ENCODE measurements at regions of chr19 and their contacts with region 1.

Region 1: DNA sequence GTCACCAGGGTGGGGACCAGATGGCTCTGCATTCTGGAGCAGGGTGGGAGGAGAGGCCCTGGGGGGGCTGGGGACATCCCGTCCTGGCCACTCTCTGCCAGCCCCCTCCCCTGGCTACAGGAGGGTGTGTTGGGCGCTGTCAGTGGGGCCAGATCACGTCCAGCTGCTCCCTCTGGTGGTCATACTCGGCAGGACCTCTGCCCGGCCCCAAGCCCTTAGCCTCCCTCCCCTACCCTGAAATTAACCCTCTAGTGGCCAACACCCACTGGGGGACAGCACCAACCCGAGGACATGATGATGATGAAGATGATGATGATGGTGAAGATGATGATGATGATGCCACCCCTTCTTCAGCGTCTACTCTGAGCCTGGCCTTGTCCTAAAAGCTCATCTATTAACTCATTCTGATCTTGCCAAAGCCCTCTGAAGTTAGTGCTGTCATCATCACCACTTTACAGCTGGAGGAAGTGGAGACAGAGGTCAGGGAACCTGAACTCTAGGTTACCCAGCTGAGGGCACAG is 590 bp upstream of the LGI4 start:
- DNase-seq: peak; percentile 86 to 93 (median 92)
- ATAC-seq: peak; percentile 98
- H3K4me3 ChIP-seq: no peak overlapping the region
- H3K27ac ChIP-seq: no peak overlapping the region
- H3K4me1 ChIP-seq: peaks cover 3 to 36% of the 10 kb centered on the region in 2 experiments; a peak in 3 of 5 replicates
- H3K27me3 ChIP-seq: peaks cover 2 to 28% of the 10 kb centered on the region in 2 experiments; a peak in 4 of 5 replicates
- CTCF ChIP-seq: peak; percentile 92 to 94 (median 92)
- EP300 ChIP-seq: no peak
- POLR2A ChIP-seq: no peak
- RAD21 ChIP-seq: peak; percentile 66 to 85

Region 2: DNA sequence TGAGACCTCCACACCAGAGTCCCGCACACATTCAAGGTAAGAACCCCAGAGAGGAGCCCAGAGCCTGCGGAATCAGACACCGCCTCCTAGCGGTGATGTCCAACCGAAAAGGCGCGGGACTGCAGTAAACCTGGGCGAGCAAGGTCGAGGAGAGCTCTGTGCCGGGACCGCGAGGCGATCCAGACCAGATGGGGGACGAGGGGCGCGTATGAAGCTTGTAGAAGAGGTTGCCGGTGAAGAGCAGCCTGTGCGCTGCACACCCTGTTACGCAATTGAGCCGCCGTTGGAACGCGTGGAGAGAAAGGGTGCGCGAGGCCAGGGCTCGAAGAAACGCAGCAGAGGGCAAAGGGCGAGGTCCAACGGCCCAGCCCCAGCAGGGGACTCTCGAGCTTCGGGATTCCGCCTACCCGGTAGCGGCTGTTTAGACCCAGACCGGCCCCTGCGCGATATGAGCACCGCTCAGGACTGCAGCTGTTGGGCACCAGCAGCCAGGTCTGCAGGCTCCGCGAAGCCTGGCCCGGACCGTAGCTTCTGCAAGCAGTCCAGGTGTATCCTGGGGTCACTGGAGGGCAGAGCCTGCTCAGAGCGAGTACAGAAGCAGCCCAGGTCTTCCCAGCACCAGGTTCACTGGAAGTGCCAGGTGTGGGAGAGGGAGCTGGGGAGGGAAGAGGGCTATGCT is 296.6 kb before region 1 on chr19:
- CTCF ChIA-PET with region 1: no interaction called
- POLR2A ChIA-PET with region 1: no interaction called
- in situ Hi-C with region 1: loop called (anchors 10 kb)
- intact Hi-C with region 1: loop called (anchors 2 kb)
- DNase-seq: no peak
- ATAC-seq: peak; percentile 53; the same call in 2 of the 3 replicates
- H3K4me3 ChIP-seq: no peak overlapping the region
- H3K27ac ChIP-seq: no peak overlapping the region
- H3K4me1 ChIP-seq: peaks cover 8 to 10% of the 10 kb centered on the region in 2 experiments; a peak in 4 of 5 replicates
- H3K27me3 ChIP-seq: no peaks in the 10 kb centered on the region; a peak in 2 of 5 replicates
- CTCF ChIP-seq: no peak
- EP300 ChIP-seq: no peak
- POLR2A ChIP-seq: no peak
- RAD21 ChIP-seq: no peak

Region 3: DNA sequence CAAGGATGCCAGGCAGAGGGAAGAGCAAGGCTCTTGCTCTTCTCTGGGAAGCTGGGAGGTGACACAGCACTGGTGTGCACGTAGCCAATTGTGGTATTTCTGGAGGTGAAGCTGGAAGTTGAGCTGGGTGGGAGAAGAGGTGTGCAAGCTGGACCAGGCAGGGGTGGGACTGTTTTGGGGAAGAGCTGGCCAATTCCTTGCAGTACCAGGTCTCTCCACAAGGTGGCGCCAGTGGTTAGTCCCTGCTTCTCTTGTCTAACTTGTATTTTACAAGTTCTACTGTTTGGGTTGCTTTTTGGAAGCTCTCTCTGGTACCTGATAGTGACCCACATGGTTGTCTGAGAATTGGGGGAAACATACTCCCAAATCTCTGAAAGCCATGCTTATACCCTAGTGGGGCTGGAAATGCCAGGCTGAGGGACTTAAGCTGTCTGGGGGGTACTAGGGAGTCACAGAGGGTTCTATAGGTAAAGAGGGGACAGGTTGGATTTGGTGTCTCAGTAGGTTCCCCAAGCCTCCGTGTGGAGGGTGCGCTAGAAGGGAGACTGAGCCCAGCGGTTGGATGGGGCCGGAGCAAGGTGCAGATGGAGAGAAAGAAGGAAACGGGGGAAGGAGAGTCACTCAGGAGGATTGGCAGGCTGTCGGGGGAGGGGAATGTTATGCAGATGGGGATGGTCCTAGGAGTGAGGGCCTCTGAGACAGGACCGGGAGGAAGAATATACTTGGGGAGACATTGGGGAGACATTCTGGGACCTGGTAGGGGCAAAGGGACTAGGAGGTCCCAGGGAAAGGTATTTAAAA is 90.9 kb before region 1 on chr19:
- CTCF ChIA-PET with region 1: interaction called, 13 read pairs
- POLR2A ChIA-PET with region 1: no interaction called
- in situ Hi-C with region 1: no loop called
- intact Hi-C with region 1: no loop called
- DNase-seq: peak; percentile 74 to 80 (median 77)
- ATAC-seq: no peak
- H3K4me3 ChIP-seq: no peak overlapping the region
- H3K27ac ChIP-seq: no peak overlapping the region
- H3K4me1 ChIP-seq: peaks cover 21 to 40% of the 10 kb centered on the region in 2 experiments
- H3K27me3 ChIP-seq: 0 out of 5 replicates have a peak, but pooled peaks cover 0 to 4% of the 10 kb centered on the region in 2 experiments
- CTCF ChIP-seq: peak; percentile 88 to 98 (median 89)
- EP300 ChIP-seq: no peak
- POLR2A ChIP-seq: no peak
- RAD21 ChIP-seq: peak; percentile 48 to 67

Region 4: GRCh38 chr19:35154525-35155406 is 19.3 kb after region 1 on chr19 and contains the start of gene FXYD5:
- CTCF ChIA-PET with region 1: no interaction called
- POLR2A ChIA-PET with region 1: no interaction called
- in situ Hi-C with region 1: no loop called
- intact Hi-C with region 1: no loop called
- DNase-seq: peak; percentile 88 to 94 (median 91)
- ATAC-seq: peak; percentile 92
- H3K4me3 ChIP-seq: peak within 1 kb of the TSS; percentile 92
- H3K27ac ChIP-seq: peak within 1 kb of the TSS; percentile 95
- H3K4me1 ChIP-seq: peaks cover 13 to 44% of the 10 kb centered on the region in 2 experiments; a peak in 4 of 5 replicates
- H3K27me3 ChIP-seq: no peaks in the 10 kb centered on the region
- CTCF ChIP-seq: peak in 2 of 3 experiments; percentile 16 to 18; a peak in 2 of 6 replicates
- EP300 ChIP-seq: 0 out of 2 replicates have a peak, but pooled peaks have one; percentile 30
- POLR2A ChIP-seq: peak; percentile 94
- RAD21 ChIP-seq: peak in 1 of 2 experiments; percentile 22; a peak in 3 of 4 replicates
- polyA plus RNA-seq, gene FXYD5: 125 to 198 TPM

Measured in K562 (cell line).